Posterior cingulate gyrus (tissue), 11 donors: ENCODE measurements at regions of chr7 and their contacts with region 1.

Region 1: DNA sequence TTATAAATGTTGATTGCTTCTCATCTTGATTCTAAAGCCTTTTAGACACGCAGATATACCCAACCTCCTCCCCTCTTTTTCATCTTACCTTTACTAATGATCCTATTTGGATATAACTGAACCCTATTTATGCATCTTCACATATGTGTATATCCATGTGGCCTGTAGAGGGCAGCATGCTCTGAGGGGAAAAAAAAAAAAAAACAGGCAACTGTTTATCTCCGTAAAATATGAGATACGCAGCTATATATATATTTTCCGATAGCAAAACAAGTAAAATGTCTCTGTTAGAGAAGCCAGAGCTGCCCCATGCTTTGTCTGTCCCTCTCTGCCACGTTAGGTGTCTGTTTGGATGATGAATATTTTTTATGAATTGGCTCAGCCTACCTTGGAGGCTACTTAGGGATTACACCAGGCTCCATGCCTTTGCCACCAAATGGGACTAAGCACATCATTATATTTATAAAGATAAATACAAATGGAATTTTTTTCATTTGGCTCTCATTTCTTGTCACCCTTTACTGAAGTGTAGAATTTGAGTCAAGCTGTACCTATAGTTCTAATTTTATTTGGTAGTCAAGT is 174.8 kb upstream of the FZD1 start:
- DNase-seq: no peak

Region 2: GRCh38 chr7:90972906-90973550 is 116.4 kb before region 1 on chr7:
- intact Hi-C with region 1: no loop called
- DNase-seq: no peak

Region 3: GRCh38 chr7:91264046-91264923 is 174.8 kb after region 1 on chr7 and contains the start of gene FZD1:
- intact Hi-C with region 1: loop called (anchors 5 kb)
- DNase-seq: peak; percentile 87 to 99 (median 93)

Region 4: DNA sequence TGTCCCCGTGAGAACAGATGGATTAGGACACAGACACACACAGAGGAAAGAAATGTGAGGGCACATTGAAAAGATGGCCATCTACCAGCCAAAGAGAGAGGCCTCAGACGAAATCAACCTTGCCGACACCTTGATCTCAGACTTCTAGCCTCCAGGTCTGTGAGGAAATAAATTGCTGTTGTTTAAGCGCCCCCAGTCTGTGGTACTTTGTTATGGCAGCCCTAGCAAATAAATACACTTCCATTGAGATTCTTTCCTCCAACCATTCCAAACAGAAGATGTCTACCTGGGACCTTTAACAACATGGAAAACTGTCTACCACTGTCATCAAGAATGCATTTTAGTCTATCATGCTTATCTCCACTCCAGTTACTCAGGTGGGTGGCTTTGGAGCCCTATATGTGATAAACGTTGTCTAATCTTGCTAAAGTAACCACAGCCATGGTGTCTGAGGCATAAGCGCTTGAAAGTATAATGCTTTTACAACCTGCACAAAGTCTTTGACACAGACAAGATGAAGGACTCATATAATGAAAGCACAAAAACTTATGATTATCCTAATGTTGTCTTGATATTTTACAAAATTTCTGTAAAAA is 546.8 kb after region 1 on chr7:
- intact Hi-C with region 1: loop called (anchors 10 kb)
- DNase-seq: no peak

Region 5: GRCh38 chr7:91784463-91784862 is 695.0 kb after region 1 on chr7:
- intact Hi-C with region 1: loop called (anchors 5 kb)
- DNase-seq: no peak

Region 6: GRCh38 chr7:92461027-92462003 is 1371.8 kb after region 1 on chr7:
- intact Hi-C with region 1: no loop called
- DNase-seq: peak in 2 of 10 donors; percentile 8 to 15